PC-9 (cell line): ENCODE measurements at regions of chr19 and their contacts with region 1.

Region 1: GRCh38 chr19:43983912-43984686 is at the start of gene ZNF155:
- DNase-seq: peak; percentile 84 to 94
- H3K4me3 ChIP-seq: peak within 1 kb of the TSS; percentile 82
- H3K27ac ChIP-seq: 0 out of 2 replicates have a peak within 1 kb of the TSS, but pooled peaks have one; percentile 4
- H3K4me1 ChIP-seq: no peaks in the 10 kb centered on the region; the same call in 1 of the 2 replicates
- H3K27me3 ChIP-seq: no peaks in the 10 kb centered on the region
- CTCF ChIP-seq: no peak
- total RNA-seq, gene ZNF155: 5.0 and 6.1 TPM in 2 replicates

Region 2: DNA sequence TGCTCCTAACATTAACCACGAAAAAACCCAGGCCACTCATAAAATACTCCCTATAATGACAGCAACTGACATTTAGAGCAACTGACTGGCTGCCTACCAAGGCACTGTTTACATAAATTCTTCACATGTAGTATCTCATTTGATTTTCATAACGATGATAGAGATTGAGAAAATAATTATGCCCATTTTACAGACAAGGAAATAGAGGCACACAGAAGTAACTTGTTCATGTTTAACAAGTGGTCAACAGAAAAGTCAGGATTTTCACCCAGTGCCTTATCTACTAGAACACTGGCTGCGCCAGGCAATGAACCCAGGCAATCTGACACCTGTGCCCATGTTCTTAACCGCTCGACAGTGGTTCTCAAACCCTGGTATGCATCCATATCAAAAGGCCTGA is 55.3 kb before region 1 on chr19:
- CTCF ChIA-PET with region 1: no interaction called
- POLR2A ChIA-PET with region 1: no interaction called
- intact Hi-C with region 1: no loop called
- DNase-seq: no peak
- H3K4me3 ChIP-seq: no peak overlapping the region
- H3K27ac ChIP-seq: no peak overlapping the region
- H3K4me1 ChIP-seq: peaks cover 6% of the 10 kb centered on the region
- H3K27me3 ChIP-seq: no peaks in the 10 kb centered on the region
- CTCF ChIP-seq: no peak

Region 3: DNA sequence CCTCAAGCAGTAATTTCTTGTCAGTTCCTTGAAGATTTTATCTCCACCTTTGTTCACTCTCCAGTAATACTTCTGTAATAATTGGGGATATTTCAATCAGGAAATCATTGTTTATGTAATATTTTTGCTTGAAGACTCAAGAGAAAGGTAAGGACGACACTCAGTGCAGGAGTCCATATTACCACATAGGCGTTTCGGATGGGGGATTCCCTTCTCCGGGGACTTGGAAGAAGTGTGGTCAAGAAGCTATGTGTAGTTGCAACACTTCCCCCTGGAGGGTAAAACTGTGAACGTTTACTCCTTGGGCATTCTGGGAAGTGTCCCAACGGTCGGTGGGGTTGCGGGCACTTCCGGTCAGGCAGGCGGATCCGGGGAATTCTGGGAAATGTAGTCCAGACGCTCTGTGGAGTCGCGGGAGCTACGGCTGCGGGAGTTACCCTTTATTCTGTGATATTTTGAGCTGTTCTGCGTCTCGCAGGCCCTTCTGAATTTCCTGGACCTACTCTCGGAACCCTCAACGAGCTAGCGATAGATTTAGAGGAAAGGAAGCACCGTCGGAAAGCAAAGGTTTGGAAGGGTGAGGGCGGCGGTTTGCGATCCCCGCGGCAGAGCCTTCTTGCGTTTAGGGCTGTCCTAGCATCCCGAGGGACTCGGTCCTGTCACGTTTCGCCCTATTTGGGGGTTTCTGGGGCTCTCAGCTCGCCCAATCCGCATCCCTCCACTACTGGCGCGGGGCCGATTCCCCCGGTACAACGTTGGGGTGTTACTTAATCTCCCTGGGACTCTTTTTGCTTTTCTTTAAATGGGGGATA is 33.1 kb before region 1 on chr19 and contains the start of gene ZNF221:
- CTCF ChIA-PET with region 1: no interaction called
- POLR2A ChIA-PET with region 1: no interaction called
- intact Hi-C with region 1: loop called (anchors 1 kb)
- DNase-seq: peak; percentile 76 to 86
- H3K4me3 ChIP-seq: peak within 1 kb of the TSS; percentile 66
- H3K27ac ChIP-seq: 0 out of 2 replicates have a peak within 1 kb of the TSS, but pooled peaks have one; percentile 34
- H3K4me1 ChIP-seq: 0 out of 2 replicates have a peak, but pooled peaks cover 4% of the 10 kb centered on the region
- H3K27me3 ChIP-seq: no peaks in the 10 kb centered on the region
- CTCF ChIP-seq: no peak
- total RNA-seq, gene ZNF221: 1.7 and 1.9 TPM in 2 replicates